Activated CD4-positive, alpha-beta T cell treated with anti-CD3 and anti-CD28 coated beads for 36 hours (primary cell): ENCODE measurements at regions of chr9 and their contacts with region 1.

Region 1: DNA sequence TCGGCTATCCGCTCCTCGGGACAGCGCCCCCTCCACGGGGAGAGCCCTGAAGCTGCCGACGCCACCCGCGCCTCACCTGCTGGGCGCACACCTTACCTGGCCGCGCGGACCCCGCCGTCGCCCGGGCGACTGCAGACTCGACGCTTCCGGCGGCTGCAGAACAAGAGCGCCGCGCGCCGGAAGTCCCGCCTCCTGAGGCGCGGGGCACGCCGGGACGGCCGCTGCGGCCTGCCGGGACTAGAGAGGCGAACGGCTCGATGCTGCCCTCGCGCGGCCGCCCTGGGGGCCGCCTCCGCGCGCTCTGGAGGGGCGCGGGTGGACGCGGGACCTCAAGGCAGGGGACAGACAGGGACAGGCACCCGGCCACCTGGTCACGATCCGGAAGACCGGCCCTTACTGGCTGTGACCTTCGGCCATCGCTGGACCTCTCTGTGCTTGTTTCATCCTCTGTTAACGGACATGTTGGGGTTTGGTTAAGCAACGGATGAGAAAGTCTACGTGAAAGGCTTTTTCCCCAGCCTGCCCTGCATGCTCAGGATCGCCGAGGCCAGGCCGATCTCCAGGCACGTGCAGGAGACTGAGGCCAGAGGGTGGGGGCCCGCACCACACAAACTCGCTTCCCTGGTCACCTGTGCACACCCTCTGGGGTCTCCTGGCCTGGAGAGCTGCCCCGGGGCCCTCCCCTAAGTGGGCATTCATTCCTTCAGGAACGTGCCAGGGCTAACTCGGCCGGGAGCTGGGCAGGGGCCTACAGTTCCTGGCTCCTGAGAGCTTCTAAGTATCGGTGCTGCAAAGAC is at the start of gene SNAPC4:
- DNase-seq: peak; percentile 93
- ATAC-seq: peak; percentile 68
- H3K4me3 Mint-ChIP-seq: peak within 1 kb of the TSS; percentile 86
- H3K27ac Mint-ChIP-seq: peak within 1 kb of the TSS; percentile 80
- H3K4me1 Mint-ChIP-seq: peaks cover 50% of the 10 kb centered on the region
- H3K27me3 Mint-ChIP-seq: no peaks in the 10 kb centered on the region
- total RNA-seq, gene SNAPC4: 12.4 to 16.8 TPM

Region 2: GRCh38 chr9:136312436-136312835 is 87.8 kb before region 1 on chr9:
- CTCF ChIA-PET with region 1: no interaction called
- POLR2A ChIA-PET with region 1: no interaction called
- intact Hi-C with region 1: loop called (anchors 1 to 5 kb)
- DNase-seq: peak; percentile 74
- ATAC-seq: peak; percentile 80
- H3K4me3 Mint-ChIP-seq: no peak overlapping the region
- H3K27ac Mint-ChIP-seq: no peak overlapping the region
- H3K4me1 Mint-ChIP-seq: no peaks in the 10 kb centered on the region
- H3K27me3 Mint-ChIP-seq: no peaks in the 10 kb centered on the region

Region 3: GRCh38 chr9:136385015-136385414 is 15.2 kb before region 1 on chr9:
- CTCF ChIA-PET with region 1: interaction called, 3 read pairs
- POLR2A ChIA-PET with region 1: no interaction called
- intact Hi-C with region 1: loop called (anchors 1 to 2 kb)
- DNase-seq: peak; percentile 68
- ATAC-seq: peak; percentile 84
- H3K4me3 Mint-ChIP-seq: no peak overlapping the region
- H3K27ac Mint-ChIP-seq: no peak overlapping the region
- H3K4me1 Mint-ChIP-seq: peaks cover 18% of the 10 kb centered on the region
- H3K27me3 Mint-ChIP-seq: no peaks in the 10 kb centered on the region

Region 4: GRCh38 chr9:136439550-136440408 is 39.5 kb after region 1 on chr9 and contains the start of gene INPP5E:
- CTCF ChIA-PET with region 1: interaction called, 3 read pairs
- POLR2A ChIA-PET with region 1: no interaction called
- intact Hi-C with region 1: loop called (anchors 1 to 5 kb)
- DNase-seq: peak; percentile 89
- ATAC-seq: peak; percentile 85
- H3K4me3 Mint-ChIP-seq: peak within 1 kb of the TSS; percentile 80
- H3K27ac Mint-ChIP-seq: no peak within 1 kb of the TSS
- H3K4me1 Mint-ChIP-seq: peaks cover 21% of the 10 kb centered on the region
- H3K27me3 Mint-ChIP-seq: no peaks in the 10 kb centered on the region
- total RNA-seq, gene INPP5E: 13.5 to 14.1 TPM

Region 5: DNA sequence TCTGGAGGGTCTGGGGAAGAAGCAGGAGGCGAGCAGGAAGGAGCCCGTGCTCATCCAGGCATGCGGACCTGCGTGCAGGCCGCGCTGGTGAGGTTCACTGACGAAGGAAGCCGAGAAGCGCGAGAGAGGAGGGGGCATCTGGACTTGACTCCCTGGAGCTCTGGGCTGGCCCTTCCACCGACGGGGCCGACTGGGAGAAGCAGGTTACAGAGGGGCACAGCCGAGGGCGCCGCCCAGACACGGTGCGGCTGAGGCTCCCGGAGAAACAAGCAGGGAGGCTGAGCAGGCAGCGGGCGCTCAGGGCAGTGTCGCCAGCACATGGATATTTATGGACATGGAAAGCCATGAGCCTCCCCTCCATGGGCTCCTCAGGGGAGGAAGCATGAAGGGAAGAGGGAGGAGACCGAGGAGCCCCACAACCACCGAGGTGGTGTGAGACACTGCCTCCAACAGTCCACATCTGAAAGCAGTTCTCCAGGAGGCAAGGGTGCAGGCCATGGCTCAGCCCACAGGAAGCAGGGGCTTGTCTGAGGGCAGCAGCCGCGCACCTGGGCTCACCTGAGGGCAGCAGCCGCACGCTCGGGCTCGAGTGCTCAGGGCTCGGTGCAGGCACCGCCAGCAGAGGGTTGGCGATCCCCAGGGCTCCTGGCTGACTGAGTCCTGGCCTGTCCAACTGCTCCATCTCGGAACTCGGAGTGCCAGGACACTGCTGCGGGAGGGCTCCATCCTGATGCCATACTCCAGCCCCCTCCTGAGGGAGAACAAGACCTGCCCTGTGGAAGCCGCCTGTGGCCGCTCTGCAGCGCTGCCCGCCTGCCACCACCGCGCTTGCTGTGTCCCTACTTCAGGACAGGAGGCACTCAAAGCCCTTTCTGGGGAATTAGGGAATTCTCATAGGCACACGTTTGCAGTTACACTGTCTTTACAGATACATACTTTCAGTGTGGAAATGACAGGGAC is 55.1 kb after region 1 on chr9:
- CTCF ChIA-PET with region 1: no interaction called
- POLR2A ChIA-PET with region 1: no interaction called
- intact Hi-C with region 1: no loop called
- DNase-seq: no peak
- ATAC-seq: no peak
- H3K4me3 Mint-ChIP-seq: no peak overlapping the region
- H3K27ac Mint-ChIP-seq: no peak overlapping the region
- H3K4me1 Mint-ChIP-seq: no peaks in the 10 kb centered on the region
- H3K27me3 Mint-ChIP-seq: no peaks in the 10 kb centered on the region

Region 6: GRCh38 chr9:136631038-136632000 is 231.1 kb after region 1 on chr9:
- CTCF ChIA-PET with region 1: no interaction called
- POLR2A ChIA-PET with region 1: no interaction called
- intact Hi-C with region 1: loop called in 1 of 2 experiments (anchors 1 kb)
- DNase-seq: peak; percentile 85
- ATAC-seq: peak; percentile 89
- H3K4me3 Mint-ChIP-seq: no peak overlapping the region
- H3K27ac Mint-ChIP-seq: no peak overlapping the region
- H3K4me1 Mint-ChIP-seq: no peaks in the 10 kb centered on the region
- H3K27me3 Mint-ChIP-seq: no peaks in the 10 kb centered on the region

Region 7: DNA sequence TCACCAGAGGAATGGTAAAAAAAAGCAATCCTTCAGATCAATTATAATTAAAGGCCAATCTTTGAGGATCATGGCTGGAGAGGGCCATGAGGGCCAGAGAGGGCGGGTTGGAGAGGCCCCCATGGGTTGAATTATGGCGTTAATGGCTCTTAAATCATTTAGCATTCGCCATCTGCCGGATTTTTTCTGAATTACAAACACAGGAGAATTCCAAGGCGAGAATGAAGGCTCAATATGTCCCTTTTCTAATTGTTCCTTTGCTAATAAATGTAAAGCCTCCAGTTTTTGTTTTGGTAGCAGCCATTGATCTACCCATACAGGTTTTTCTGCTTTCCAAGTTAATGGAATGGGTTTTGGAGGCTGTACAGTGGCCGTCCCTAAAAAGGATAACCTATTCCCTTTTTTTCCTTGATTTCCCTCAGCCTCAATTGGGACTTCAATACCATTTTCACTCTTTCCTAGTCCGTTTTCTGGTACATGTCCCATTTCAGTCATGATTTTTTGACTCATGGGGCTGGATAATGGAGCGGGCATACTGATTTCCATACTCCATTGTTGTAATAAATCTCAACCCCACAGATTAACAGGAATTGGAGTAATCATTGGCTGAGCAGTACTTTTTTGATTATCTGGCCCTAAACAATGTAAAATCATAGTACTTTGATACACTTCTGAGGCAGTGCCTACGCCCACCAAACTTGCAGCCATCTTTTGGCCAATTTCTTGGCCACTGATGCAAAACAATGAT is 384.2 kb after region 1 on chr9:
- CTCF ChIA-PET with region 1: no interaction called
- POLR2A ChIA-PET with region 1: no interaction called
- intact Hi-C with region 1: no loop called
- DNase-seq: no peak
- ATAC-seq: no peak
- H3K4me3 Mint-ChIP-seq: no peak overlapping the region
- H3K27ac Mint-ChIP-seq: no peak overlapping the region
- H3K4me1 Mint-ChIP-seq: peaks cover 9% of the 10 kb centered on the region
- H3K27me3 Mint-ChIP-seq: peaks cover under 1% of the 10 kb centered on the region